AG04450 (cell line): ENCODE measurements at regions of chr5 and their contacts with region 1.

Region 1: DNA sequence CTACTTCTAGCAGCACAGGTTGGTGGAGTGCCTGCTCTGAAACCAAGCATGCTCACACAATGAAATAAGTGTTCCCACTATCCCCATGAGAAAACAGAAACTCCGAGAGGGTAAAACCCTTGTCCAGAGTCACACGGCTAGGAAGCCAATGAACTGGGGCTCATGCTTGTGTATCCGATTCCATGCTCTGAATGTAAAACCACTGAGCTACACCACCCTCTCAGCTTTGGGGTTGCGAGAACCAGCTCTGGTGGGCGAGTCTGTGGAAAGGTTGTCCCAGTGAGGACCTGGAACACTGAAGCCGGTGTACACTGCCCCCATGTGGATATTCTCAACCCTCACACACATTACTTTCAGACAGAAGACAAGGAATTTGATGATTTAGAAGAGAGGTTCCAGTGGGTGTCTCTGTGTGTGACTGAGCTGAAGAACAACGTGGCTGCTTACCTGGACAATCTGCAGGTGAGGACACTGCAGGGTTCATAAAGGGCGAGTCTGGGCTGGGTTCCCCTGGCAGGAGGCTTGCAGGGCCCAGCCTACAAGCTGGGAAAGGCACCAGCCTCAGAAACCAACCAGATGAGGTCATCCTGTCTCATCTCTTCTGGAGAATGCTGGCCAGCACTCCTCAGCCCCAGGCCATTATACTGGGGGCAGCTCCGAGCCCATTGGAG is 37.4 kb downstream of the ARHGEF37 start:
- DNase-seq: peak; percentile 24
- H3K4me3 ChIP-seq: no peak overlapping the region
- H3K27ac ChIP-seq: no peak overlapping the region
- H3K27me3 ChIP-seq: peaks cover 13% of the 10 kb centered on the region
- CTCF ChIP-seq: peak; percentile 79

Region 2: GRCh38 chr5:149561848-149562247 is 56.9 kb before region 1 on chr5:
- CTCF ChIA-PET with region 1: interaction called, 14 read pairs
- POLR2A ChIA-PET with region 1: no interaction called
- DNase-seq: peak; percentile 84
- H3K4me3 ChIP-seq: no peak overlapping the region; the same call in 1 of the 2 replicates
- H3K27ac ChIP-seq: peak overlapping the region; percentile 90
- H3K27me3 ChIP-seq: no peaks in the 10 kb centered on the region
- CTCF ChIP-seq: no peak

Region 3: DNA sequence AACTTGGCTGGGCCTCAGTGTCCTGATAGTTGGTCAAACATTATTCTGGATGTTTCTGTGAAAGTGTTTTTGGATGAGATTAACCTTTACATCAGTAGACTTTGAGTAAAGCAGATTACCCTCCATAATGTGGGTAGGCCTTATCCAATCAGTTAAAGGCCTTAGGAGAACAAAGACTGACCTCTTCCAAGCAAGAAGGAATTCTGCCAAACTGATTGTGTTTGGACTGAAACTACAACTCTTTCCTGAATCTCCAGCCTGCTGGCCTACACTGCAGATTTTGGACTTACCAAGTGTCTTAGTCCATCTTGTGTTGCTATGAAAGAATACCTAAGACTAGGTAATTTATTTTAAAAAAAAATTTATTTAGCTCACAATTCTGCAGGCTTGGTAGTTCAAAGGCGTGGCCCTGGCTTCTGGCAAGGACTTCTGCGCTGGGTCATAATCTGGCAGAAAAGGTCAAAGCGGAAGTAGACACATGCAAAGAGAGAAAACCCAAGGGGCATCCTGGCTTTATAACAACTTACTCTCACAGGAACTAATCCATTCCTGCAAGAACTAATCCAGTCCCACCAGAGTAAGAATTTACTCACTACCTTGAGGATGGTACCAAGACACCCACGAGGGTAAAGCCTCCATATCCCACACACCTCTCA is 46.0 kb before region 1 on chr5:
- CTCF ChIA-PET with region 1: interaction called, 10 read pairs
- POLR2A ChIA-PET with region 1: interaction called, 4 read pairs
- DNase-seq: no peak
- H3K4me3 ChIP-seq: no peak overlapping the region
- H3K27ac ChIP-seq: no peak overlapping the region
- H3K27me3 ChIP-seq: no peaks in the 10 kb centered on the region
- CTCF ChIP-seq: no peak

Region 4: DNA sequence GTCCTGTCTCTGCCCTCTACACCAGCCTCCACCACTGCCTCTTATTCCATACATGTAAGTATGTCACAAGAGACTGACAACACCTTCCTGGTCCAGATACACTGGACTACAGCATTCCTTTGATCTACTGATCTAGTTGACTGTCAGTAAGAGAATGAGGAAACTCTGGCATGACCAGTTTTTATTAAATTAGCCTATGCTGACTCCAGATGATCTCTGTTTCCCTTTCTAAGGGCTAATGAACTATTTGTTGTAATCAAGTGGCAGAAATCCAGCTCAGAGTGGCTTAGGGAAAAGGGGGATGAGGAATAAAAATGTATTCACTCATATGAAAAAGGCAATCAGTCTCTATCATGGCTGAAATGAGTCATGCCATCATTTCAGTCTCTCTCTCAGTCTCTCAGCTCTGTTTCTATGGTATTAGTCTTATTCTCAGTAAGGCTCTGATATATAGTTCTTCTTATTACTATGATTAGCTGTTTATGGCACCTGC is 31.9 kb before region 1 on chr5:
- CTCF ChIA-PET with region 1: interaction called, 14 read pairs
- POLR2A ChIA-PET with region 1: interaction called, 7 read pairs
- DNase-seq: no peak
- H3K4me3 ChIP-seq: no peak overlapping the region
- H3K27ac ChIP-seq: no peak overlapping the region
- H3K27me3 ChIP-seq: no peaks in the 10 kb centered on the region
- CTCF ChIP-seq: no peak

Region 5: GRCh38 chr5:149636851-149637246 is 18.1 kb after region 1 on chr5:
- CTCF ChIA-PET with region 1: interaction called, 11 read pairs
- POLR2A ChIA-PET with region 1: no interaction called
- DNase-seq: peak; percentile 48
- H3K4me3 ChIP-seq: no peak overlapping the region
- H3K27ac ChIP-seq: no peak overlapping the region
- H3K27me3 ChIP-seq: no peaks in the 10 kb centered on the region
- CTCF ChIP-seq: peak; percentile 86

Region 6: DNA sequence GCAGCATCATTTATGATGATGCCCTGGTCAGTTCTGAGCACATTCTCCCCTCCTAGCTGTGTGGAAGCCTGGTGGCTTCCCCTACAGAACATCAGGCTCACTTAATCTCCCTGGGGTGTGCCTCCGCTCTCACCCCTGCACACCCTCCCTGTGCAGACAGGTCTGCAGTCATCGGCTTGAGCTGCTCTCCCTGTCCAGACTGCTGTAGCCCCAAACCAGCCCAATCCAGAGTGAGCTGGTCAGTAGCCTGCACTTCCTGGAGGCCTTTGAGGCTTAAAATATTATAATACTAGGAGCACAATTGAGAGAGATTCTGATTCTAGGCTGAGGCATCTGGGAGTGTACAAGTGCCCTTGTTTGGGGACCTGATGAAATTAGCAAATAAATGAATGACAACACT is 171.6 kb after region 1 on chr5:
- CTCF ChIA-PET with region 1: no interaction called
- POLR2A ChIA-PET with region 1: no interaction called
- DNase-seq: no peak
- H3K4me3 ChIP-seq: no peak overlapping the region
- H3K27ac ChIP-seq: no peak overlapping the region
- H3K27me3 ChIP-seq: peaks cover 20% of the 10 kb centered on the region
- CTCF ChIP-seq: no peak